ENCODE measurements at regions of chr4 and their contacts with region 1.

Region 1: DNA sequence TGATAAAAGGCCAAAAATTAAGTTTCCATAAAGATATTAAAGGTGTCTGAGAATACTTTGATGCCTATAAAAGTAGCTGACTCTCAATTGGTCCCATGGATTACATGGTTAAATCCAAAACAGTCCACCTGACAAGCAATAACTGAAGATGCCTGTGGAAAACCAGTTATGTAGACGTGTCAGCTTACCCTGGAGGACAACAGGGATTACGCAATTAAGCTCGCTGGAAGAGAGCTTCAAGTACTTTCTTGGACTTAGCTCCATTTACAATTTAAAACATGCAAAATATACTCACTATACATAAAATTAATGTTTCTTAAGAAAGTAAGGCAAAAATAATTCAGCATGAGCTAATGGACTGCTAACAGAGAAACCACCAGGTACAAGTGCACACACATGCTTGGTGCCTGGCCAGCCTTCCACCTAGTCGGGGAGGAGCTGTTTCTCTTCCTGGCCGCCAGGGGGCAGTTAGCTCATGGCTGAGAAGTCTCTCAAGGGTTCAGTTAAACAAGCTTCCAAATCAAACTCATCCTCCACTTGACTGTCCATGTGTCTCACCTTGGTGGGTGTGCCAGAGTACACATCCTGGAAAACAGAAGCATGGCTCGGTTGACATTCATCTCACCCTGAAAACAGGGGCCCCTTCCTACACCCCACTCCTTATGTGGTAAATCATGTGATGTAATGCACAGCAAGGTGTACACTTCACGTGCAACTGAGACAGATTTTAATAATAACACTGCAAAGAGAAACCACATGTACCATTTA is 9.2 kb upstream of the FAM53A start:
- DNase-seq: peak; percentile 75
- ATAC-seq: peak; percentile 94
- H3K4me3 ChIP-seq: no peak overlapping the region
- H3K27ac ChIP-seq: no peak overlapping the region
- H3K4me1 ChIP-seq: no peaks in the 10 kb centered on the region
- H3K27me3 ChIP-seq: no peaks in the 10 kb centered on the region
- CTCF ChIP-seq: peak; percentile 91
- EP300 ChIP-seq: no peak
- POLR2A ChIP-seq: no peak
- RAD21 ChIP-seq: peak; percentile 78

Region 2: DNA sequence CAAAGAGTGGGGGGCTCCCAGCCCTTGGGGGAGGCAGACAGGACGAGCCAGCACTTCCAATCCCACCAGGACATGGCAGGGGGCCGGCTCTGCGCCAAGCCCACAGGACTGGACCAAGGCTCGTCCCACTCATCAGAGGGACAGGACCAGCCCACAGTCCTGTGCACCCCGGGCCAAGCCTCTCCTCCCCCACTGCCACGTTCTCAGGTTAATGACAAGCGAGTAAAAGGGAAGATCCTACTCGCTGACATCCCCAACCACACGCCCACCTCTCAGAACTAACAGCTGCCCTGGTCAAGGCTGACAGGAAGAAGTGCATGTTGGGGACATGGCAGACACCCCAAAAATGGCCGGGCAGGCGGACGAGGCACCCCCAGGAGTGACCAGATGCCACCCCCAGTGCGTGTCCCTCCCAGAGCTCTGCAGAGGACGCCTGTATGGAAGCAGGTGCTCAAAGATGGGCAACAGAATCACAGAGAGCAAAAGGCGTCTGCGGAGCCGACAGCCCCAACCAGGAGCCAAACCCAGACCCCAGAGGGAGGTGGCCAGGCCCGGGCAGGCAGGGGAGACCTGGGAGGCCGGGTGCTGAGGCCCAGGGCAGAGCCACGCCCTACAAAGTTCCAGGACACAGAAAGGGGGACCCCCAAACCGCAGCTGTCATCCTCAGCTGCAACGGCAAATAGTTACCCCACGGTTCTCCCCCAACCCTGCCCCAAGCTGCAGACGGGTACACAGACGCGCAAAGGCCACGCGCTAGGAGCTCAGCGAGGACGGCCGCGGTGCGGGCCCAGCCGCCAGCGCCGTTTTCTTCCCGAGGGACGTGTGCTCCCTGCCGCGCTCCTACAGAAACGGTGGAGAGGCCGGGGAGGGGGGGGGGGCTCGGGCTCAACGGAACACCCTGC is 446.2 kb before region 1 on chr4:
- CTCF ChIA-PET with region 1: no interaction called
- POLR2A ChIA-PET with region 1: no interaction called
- in situ Hi-C with region 1: no loop called
- intact Hi-C with region 1: no loop called
- DNase-seq: no peak
- ATAC-seq: peak; percentile 4; the same call in 2 of the 3 replicates
- H3K4me3 ChIP-seq: peak overlapping the region; percentile 87 to 95 (median 89)
- H3K27ac ChIP-seq: peak overlapping the region; percentile 91
- H3K4me1 ChIP-seq: peaks cover 50% of the 10 kb centered on the region
- H3K27me3 ChIP-seq: no peaks in the 10 kb centered on the region
- CTCF ChIP-seq: no peak
- EP300 ChIP-seq: no peak
- POLR2A ChIP-seq: no peak
- RAD21 ChIP-seq: no peak

Region 3: DNA sequence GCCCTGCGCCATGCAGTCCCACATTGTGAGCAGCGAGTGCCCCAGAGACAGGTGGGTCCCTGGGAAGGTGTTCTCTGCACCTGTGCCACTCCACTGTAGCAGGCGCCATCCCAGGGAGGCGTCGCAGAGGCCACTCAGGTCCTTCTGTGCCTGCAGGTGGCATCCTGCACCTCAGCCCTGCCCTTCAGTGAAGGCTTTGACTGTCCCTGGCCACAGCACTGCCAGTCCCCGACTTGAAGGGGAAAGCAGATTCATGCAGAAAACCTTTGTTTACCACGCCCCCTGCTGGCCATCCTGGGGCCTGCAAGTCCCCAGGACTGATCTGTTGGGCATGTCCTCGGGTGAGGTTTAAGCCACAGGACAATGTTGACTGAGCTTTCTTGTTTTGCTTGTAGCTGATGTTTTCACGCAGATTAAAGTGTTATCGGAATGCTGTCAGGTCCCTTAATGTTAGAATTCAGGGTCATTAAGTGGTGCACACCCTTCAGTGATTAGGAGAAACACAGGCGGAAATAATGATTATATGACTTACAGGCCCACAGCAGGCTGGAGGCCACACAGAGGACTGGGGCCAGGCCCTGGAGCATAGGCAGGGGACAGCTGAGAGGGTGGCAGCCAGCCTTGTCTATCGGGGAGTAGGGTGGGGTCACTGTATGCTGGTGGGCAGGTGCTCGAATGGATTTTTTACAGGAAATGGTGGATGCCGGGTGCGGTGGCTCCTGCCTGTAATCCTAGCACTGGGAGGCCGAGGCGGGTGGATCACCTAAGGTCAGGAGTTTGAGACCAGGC is 33.0 kb after region 1 on chr4:
- CTCF ChIA-PET with region 1: interaction called, 40 read pairs
- POLR2A ChIA-PET with region 1: interaction called, 9 read pairs
- in situ Hi-C with region 1: loop called (anchors 5 kb)
- intact Hi-C with region 1: loop called (anchors 1 kb)
- DNase-seq: peak; percentile 82
- ATAC-seq: peak; percentile 64
- H3K4me3 ChIP-seq: no peak overlapping the region
- H3K27ac ChIP-seq: no peak overlapping the region
- H3K4me1 ChIP-seq: peaks cover 32% of the 10 kb centered on the region
- H3K27me3 ChIP-seq: no peaks in the 10 kb centered on the region
- CTCF ChIP-seq: peak; percentile 94
- EP300 ChIP-seq: no peak
- POLR2A ChIP-seq: no peak
- RAD21 ChIP-seq: peak; percentile 71